ENCODE measurements at regions of chr11 and their contacts with region 1.

Region 1: GRCh38 chr11:60343094-60343704 is 16.1 kb downstream of the MS4A6E start:
- DNase-seq: peak in 2 of 9 donors; percentile 4 to 9
- ATAC-seq: no peak
- H3K4me3 ChIP-seq: no peak overlapping the region
- H3K4me3 Mint-ChIP-seq: no peak overlapping the region
- H3K27ac ChIP-seq: no peak overlapping the region
- H3K27ac Mint-ChIP-seq: no peak overlapping the region
- H3K4me1 ChIP-seq: no peaks in the 10 kb centered on the region
- H3K4me1 Mint-ChIP-seq: peaks cover 0 to 2% (median 0%) of the 10 kb centered on the region in 7 donors
- H3K27me3 ChIP-seq: no peaks in the 10 kb centered on the region
- H3K27me3 Mint-ChIP-seq: peaks cover 2 to 33% (median 20%) of the 10 kb centered on the region in 5 donors

Region 2: DNA sequence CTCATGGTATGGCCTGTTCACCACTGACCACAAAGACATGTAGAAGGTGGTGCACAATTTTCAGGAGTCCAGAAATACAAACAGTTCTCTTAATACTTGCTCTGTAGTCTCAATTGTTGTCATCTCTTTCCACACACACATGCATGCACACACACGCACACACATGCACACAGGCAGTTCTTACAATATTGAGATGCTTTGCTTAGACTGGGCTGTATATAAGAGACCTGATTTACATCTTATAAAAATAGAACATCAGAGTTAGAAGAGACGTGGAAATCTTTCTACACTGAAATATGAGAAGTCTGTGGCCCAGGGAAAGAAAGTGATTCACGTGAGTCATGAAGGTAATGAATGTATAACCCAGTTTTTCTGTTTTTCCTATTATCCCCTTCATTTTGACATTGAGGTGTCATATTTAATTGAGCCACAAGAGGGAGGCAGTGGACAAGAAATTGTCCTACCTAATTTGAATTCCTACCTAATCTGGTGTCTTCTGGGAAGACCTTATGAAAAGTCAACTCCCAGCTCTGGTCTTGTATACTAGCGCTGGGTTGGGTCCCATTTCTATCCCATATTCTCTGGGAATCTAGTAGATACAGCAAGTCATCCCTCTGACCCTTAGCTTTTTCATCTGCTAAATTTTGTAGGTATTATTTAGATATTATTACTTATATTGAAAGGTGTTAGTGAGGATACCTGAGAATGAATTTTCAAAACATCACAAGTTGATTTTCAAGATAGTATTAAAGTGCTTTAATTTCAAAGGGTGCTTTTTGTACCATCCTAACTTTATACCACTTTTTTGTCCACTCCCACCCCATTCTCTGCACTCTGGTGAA is 77.6 kb before region 1 on chr11:
- CTCF ChIA-PET with region 1: no interaction called
- POLR2A ChIA-PET with region 1: no interaction called
- intact Hi-C with region 1: no loop called
- DNase-seq: peak in 2 of 9 donors; percentile 5 to 10
- ATAC-seq: peak; percentile 58
- H3K4me3 ChIP-seq: no peak overlapping the region
- H3K4me3 Mint-ChIP-seq: no peak overlapping the region
- H3K27ac ChIP-seq: no peak overlapping the region
- H3K27ac Mint-ChIP-seq: no peak overlapping the region
- H3K4me1 ChIP-seq: no peaks in the 10 kb centered on the region
- H3K4me1 Mint-ChIP-seq: peaks cover 0 to 2% (median 0%) of the 10 kb centered on the region in 7 donors
- H3K27me3 ChIP-seq: peaks cover 0 to 4% of the 10 kb centered on the region in 2 donors
- H3K27me3 Mint-ChIP-seq: peaks cover 0 to 16% (median 12%) of the 10 kb centered on the region in 5 donors

Region 3: DNA sequence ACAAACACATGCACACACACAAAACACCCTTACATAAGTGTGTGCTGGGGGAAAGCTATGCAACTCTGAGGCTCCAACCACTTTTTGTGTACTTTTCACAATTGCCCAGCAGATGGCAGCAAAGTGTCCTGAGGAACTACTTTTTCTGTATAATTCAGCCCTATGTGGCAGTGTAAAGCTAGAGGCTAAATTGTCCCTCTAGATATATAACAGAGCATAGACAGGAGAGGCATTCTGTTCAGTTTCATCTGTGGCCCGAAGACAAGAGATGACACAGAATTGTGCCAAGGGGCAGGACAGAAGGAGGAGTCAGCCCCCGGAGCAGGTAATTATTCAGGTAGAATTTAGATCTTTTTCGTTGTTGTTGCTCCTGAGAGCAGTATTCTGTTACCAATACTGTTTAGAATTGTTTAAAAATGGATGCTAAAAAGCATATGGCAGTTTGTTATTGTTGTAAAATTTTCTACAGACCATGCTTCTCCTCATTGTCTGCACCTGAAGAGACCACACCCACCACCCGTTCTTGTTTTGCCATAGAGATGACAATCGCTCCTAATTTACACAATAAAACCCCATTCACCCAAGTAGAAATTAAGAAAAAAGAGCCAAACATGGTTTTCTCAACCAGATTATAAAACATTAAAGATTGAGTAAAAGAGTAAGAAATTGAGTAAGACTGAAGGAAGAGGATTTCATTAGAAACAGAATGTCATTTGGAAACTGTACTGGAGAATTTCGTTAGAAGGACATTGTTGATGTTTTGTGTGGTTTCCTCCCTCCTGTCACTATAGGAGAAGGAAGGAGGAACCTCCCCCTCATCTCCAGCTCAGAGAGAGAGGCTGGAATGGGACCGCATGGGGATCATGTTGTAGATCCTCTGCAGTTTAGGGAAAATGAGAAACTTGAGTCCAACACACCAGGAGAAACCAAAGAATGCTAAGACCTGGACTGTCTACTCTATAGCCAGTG is 20.6 kb after region 1 on chr11:
- CTCF ChIA-PET with region 1: no interaction called
- POLR2A ChIA-PET with region 1: no interaction called
- intact Hi-C with region 1: no loop called
- DNase-seq: peak in 8 of 9 donors; percentile 3 to 54 (median 41)
- ATAC-seq: peak; percentile 85
- H3K4me3 ChIP-seq: no peak overlapping the region
- H3K4me3 Mint-ChIP-seq: peak overlapping the region in 1 of 10 donors; percentile 4
- H3K27ac ChIP-seq: no peak overlapping the region
- H3K27ac Mint-ChIP-seq: no peak overlapping the region
- H3K4me1 ChIP-seq: no peaks in the 10 kb centered on the region
- H3K4me1 Mint-ChIP-seq: no peaks in the 10 kb centered on the region
- H3K27me3 ChIP-seq: no peaks in the 10 kb centered on the region
- H3K27me3 Mint-ChIP-seq: peaks cover 8 to 30% (median 23%) of the 10 kb centered on the region in 5 donors

Region 4: GRCh38 chr11:60615497-60615896 is 272.3 kb after region 1 on chr11:
- CTCF ChIA-PET with region 1: no interaction called
- POLR2A ChIA-PET with region 1: no interaction called
- intact Hi-C with region 1: loop called in 1 of 2 experiments (anchors 1 kb)
- DNase-seq: no peak
- ATAC-seq: no peak
- H3K4me3 ChIP-seq: no peak overlapping the region
- H3K4me3 Mint-ChIP-seq: no peak overlapping the region
- H3K27ac ChIP-seq: no peak overlapping the region
- H3K27ac Mint-ChIP-seq: no peak overlapping the region
- H3K4me1 ChIP-seq: no peaks in the 10 kb centered on the region
- H3K4me1 Mint-ChIP-seq: peaks cover 0 to 2% (median 0%) of the 10 kb centered on the region in 7 donors
- H3K27me3 ChIP-seq: no peaks in the 10 kb centered on the region
- H3K27me3 Mint-ChIP-seq: peaks cover 10 to 29% (median 17%) of the 10 kb centered on the region in 5 donors